MCF 10A (cell line): ENCODE measurements at regions of chr14 and their contacts with region 1.

Region 1: GRCh38 chr14:28577711-28578131 is 188.9 kb upstream of the FOXG1 start:
- DNase-seq: peak; percentile 71
- H3K4me3 Mint-ChIP-seq: peak overlapping the region; percentile 67
- H3K27ac Mint-ChIP-seq: peak overlapping the region; percentile 78
- H3K4me1 Mint-ChIP-seq: peaks cover 27% of the 10 kb centered on the region
- H3K27me3 Mint-ChIP-seq: no peaks in the 10 kb centered on the region
- CTCF ChIP-seq: no peak

Region 2: GRCh38 chr14:28375295-28375694 is 202.4 kb before region 1 on chr14:
- CTCF ChIA-PET with region 1: interaction called, 6 read pairs
- POLR2A ChIA-PET with region 1: no interaction called
- intact Hi-C with region 1: loop called (anchors 1 kb)
- DNase-seq: peak; percentile 64
- H3K4me3 Mint-ChIP-seq: no peak overlapping the region
- H3K27ac Mint-ChIP-seq: peak overlapping the region; percentile 31
- H3K4me1 Mint-ChIP-seq: peaks cover 11% of the 10 kb centered on the region
- H3K27me3 Mint-ChIP-seq: no peaks in the 10 kb centered on the region
- CTCF ChIP-seq: peak; percentile 35

Region 3: DNA sequence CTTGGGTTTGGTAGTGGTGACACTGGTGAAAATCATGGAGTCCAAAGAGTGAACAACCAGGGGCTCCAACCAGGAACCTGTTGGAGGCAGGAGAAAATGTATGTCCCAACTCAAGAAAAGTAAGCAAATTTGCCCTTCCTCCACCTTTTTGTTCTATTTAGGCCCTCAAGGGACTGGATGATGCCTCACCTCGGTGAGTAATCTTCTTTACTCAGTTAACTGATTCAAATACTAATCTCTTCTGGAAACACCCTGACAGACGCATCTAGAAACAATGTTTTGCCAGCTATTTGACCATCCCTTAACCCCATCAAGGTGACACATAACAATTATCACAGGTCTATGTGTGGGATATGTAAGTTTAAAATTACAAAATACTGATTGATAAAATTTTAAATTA is 83.5 kb before region 1 on chr14:
- CTCF ChIA-PET with region 1: no interaction called
- POLR2A ChIA-PET with region 1: no interaction called
- intact Hi-C with region 1: loop called (anchors 10 kb)
- DNase-seq: peak; percentile 58
- H3K4me3 Mint-ChIP-seq: no peak overlapping the region
- H3K27ac Mint-ChIP-seq: peak overlapping the region; percentile 61
- H3K4me1 Mint-ChIP-seq: peaks cover 10% of the 10 kb centered on the region
- H3K27me3 Mint-ChIP-seq: no peaks in the 10 kb centered on the region
- CTCF ChIP-seq: no peak

Region 4: GRCh38 chr14:28629324-28629992 is 51.7 kb after region 1 on chr14:
- CTCF ChIA-PET with region 1: no interaction called
- POLR2A ChIA-PET with region 1: no interaction called
- intact Hi-C with region 1: no loop called
- DNase-seq: peak; percentile 53
- H3K4me3 Mint-ChIP-seq: peak overlapping the region; percentile 47
- H3K27ac Mint-ChIP-seq: peak overlapping the region; percentile 49
- H3K4me1 Mint-ChIP-seq: peaks cover 16% of the 10 kb centered on the region
- H3K27me3 Mint-ChIP-seq: no peaks in the 10 kb centered on the region
- CTCF ChIP-seq: no peak

Region 5: GRCh38 chr14:28695095-28695494 is 117.4 kb after region 1 on chr14:
- CTCF ChIA-PET with region 1: no interaction called
- POLR2A ChIA-PET with region 1: no interaction called
- intact Hi-C with region 1: no loop called
- DNase-seq: no peak
- H3K4me3 Mint-ChIP-seq: no peak overlapping the region
- H3K27ac Mint-ChIP-seq: no peak overlapping the region
- H3K4me1 Mint-ChIP-seq: peaks cover 1% of the 10 kb centered on the region
- H3K27me3 Mint-ChIP-seq: no peaks in the 10 kb centered on the region
- CTCF ChIP-seq: no peak